ENCODE measurements at regions of chr16 and their contacts with region 1.

Region 1: DNA sequence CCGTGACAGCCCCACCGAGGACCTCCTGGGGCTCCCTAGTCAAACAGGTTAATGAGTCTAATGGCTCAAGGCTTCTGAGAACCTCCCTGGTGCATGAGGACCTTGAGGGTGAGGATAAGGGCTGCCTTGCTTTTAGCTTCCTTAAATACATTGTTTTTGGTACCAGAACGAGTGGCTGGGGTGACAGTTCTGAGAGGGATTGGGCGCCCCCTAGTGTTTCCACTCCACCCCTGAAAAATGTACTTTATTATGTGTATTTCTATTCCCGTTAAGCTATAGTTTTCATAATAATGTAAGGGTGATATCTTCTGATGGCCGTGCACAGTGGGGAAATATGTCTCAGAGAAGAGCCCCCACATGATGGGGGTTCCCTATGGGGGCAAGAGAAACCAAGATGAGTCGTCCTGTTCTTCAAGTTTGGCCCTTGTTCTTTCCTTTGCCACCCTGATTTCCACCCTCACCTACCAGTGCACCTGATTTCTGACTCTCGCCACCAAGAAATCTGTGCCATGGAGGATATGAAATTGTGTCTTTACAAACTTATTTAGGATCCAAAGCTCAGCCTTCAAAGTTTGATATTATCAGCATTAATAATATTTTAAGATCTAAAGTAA is 14.5 kb upstream of the VWA3A start:
- DNase-seq: peak; percentile 48
- ATAC-seq: peak; percentile 42 to 59

Region 2: GRCh38 chr16:22001591-22001990 is 76.2 kb before region 1 on chr16:
- intact Hi-C with region 1: loop called (anchors 2 to 5 kb)
- DNase-seq: no peak
- ATAC-seq: peak in 1 of 2 donors; percentile 42

Measured in left cardiac atrium (tissue), 4 donors.